OCI-LY7 (cell line): ENCODE measurements at regions of chr16 and their contacts with region 1.

Region 1: GRCh38 chr16:85305996-85306792 is 193.9 kb upstream of the CIBAR2 start:
- DNase-seq: peak; percentile 91
- H3K4me3 ChIP-seq: no peak overlapping the region
- H3K27ac ChIP-seq: peak overlapping the region; percentile 96
- H3K4me1 ChIP-seq: peaks cover 86% of the 10 kb centered on the region
- CTCF ChIP-seq: no peak

Region 2: DNA sequence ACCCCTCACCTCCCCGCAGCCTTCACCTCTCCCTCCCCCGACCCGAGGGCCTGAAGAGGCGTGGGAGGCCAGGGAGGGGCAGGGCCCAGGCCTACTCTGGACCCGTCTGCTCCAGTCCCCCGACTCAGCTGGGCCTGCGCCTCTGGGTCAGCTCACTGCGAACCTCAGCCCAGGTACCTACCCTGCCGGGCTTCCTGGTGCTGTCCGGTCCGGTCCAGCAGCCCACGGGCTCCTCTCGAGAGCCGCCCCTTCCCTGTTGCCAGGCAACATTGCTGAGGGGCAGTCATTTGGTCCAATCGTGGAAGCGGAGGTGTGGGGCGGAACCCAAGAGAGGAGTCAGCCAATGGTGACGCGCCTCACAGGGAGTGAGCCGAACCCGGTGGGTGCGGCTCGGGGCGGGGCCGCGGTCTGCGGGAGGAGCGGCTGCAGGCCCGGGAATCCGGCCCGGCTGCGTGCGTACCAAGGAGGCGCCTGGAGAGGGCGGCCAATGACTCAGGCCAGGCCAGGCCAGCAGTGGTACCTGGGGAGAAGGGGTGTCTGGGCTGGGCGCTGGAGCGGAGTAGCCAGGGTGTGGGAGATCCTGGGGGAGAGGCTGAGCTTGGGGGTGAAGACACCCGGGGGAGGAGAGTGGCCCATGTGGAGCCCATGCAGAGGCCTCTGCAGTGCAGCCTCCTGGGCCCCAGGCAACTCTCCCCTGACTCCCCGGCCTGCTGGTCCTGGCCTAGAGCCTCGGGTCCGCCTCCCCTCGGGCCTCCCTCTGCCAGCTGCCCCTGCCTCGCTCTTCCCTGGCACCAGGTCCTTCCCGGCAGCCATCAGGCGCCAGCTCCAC is 801.6 kb before region 1 on chr16 and contains the start of gene MEAK7:
- CTCF ChIA-PET with region 1: no interaction called
- POLR2A ChIA-PET with region 1: no interaction called
- intact Hi-C with region 1: loop called (anchors 5 kb)
- DNase-seq: peak; percentile 98
- H3K4me3 ChIP-seq: peak within 1 kb of the TSS; percentile 83
- H3K27ac ChIP-seq: peak within 1 kb of the TSS; percentile 92
- H3K4me1 ChIP-seq: peaks cover 48% of the 10 kb centered on the region
- CTCF ChIP-seq: peak; percentile 19; the same call in 1 of the 2 replicates
- total RNA-seq, gene MEAK7: 9.6 and 12.0 TPM in 2 replicates

Region 3: GRCh38 chr16:85253084-85253941 is 52.9 kb before region 1 on chr16:
- CTCF ChIA-PET with region 1: interaction called, 18 read pairs
- POLR2A ChIA-PET with region 1: interaction called, 5 read pairs
- intact Hi-C with region 1: loop called (anchors 2 kb)
- DNase-seq: peak; percentile 81
- H3K4me3 ChIP-seq: no peak overlapping the region
- H3K27ac ChIP-seq: peak overlapping the region; percentile 68
- H3K4me1 ChIP-seq: peaks cover 34% of the 10 kb centered on the region
- CTCF ChIP-seq: peak; percentile 97

Region 4: GRCh38 chr16:85360323-85361277 is 54.4 kb after region 1 on chr16:
- CTCF ChIA-PET with region 1: interaction called, 3 read pairs
- POLR2A ChIA-PET with region 1: interaction called, 4 read pairs
- intact Hi-C with region 1: loop called (anchors 5 kb)
- DNase-seq: peak; percentile 68
- H3K4me3 ChIP-seq: no peak overlapping the region
- H3K27ac ChIP-seq: no peak overlapping the region
- H3K4me1 ChIP-seq: peaks cover 12% of the 10 kb centered on the region
- CTCF ChIP-seq: no peak

Region 5: DNA sequence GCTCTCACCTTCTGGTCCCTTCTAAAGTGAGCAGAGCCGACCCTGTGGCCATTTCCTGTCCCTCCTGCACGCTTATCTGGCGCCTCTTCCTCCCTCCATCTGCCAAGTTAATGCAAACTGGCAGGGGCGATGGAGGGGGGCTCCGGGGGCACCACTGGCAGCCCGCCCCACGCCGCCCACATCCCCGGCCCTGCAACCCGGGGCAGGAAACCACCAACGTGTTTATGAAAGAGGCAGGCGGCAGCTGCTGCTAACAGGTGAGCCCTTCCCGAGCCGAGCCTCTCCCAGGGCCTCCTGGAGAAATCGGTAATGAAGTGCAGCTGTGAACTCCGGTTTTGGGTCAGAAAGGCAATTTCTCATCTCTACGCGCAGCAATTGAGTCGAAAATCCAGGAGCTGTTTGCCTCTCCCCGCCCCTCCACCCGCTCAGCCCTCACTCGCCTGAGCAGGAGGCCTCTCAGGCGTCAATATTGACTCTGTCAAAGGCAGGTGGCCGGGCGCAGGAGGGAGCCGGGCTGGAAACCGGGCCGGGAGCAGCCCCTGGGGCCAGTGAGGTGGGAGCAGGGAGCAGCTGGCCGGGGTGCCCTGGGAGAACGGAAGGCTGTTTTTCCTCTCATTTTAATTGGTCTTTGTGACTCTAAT is 142.5 kb after region 1 on chr16:
- CTCF ChIA-PET with region 1: no interaction called
- POLR2A ChIA-PET with region 1: interaction called, 7 read pairs
- intact Hi-C with region 1: loop called (anchors 5 kb)
- DNase-seq: peak; percentile 87
- H3K4me3 ChIP-seq: peak overlapping the region; percentile 18
- H3K27ac ChIP-seq: peak overlapping the region; percentile 86
- H3K4me1 ChIP-seq: peaks cover 61% of the 10 kb centered on the region
- CTCF ChIP-seq: no peak

Region 6: GRCh38 chr16:85750827-85751697 is 444.9 kb after region 1 on chr16 and contains the start of gene C16orf74:
- CTCF ChIA-PET with region 1: no interaction called
- POLR2A ChIA-PET with region 1: no interaction called
- intact Hi-C with region 1: loop called (anchors 10 kb)
- DNase-seq: peak; percentile 45
- H3K4me3 ChIP-seq: peak within 1 kb of the TSS; percentile 62
- H3K27ac ChIP-seq: no peak within 1 kb of the TSS
- H3K4me1 ChIP-seq: peaks cover 97% of the 10 kb centered on the region
- CTCF ChIP-seq: no peak
- total RNA-seq, gene C16orf74: 6.8 and 12.1 TPM in 2 replicates